GM12878 (cell line): ENCODE measurements at regions of chr6 and their contacts with region 1.

Region 1: DNA sequence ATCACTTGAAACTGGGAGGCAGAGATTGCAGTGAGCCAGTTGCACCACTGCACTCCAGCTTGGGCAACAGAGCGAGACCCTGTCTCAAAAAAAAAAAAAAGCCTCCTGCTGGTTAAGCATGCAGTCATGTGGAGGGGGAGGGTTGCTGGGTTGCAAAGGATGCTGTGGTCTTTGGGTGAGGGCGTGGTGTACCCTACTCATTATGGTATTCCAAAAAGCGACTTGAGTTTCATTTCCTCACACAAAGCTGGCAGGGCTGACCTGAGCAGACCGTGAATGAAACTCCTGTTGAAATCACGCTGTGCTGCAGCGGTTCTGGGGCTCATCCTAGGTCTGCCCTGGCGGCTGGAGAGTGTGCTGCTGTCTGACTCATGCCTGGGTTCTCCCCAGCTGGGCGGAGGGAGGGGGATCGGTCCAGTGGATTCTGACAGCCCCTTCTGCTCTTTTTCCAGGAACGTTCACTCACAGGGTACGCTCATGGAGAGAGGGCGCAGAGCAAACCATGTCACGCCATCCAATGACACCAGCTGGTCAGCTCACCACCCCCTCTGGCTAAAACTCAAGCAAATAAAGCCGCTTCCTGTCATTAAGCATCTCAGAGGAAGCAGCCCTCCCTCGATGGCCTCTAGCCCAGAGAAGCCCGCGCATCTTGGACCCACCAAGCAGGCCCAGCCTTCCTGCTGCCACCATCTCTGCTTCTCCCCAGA is 166.2 kb downstream of the SCML4 start:
- DNase-seq: peak; percentile 96
- ATAC-seq: peak; percentile 92
- H3K4me3 ChIP-seq: peak overlapping the region; percentile 64
- H3K27ac ChIP-seq: peak overlapping the region; percentile 84
- H3K4me1 ChIP-seq: peaks cover 19% of the 10 kb centered on the region
- H3K27me3 ChIP-seq: no peaks in the 10 kb centered on the region
- CTCF ChIP-seq: peak; percentile 4 to 47 (median 43); a peak in 3 of 6 replicates
- EP300 ChIP-seq: peak in 1 of 2 experiments; percentile 57; a peak in 1 of 4 replicates
- POLR2A ChIP-seq: peak; percentile 64
- RAD21 ChIP-seq: 0 out of 2 replicates have a peak, but pooled peaks have one; percentile 0

Region 2: GRCh38 chr6:107114213-107114905 is 543.5 kb before region 1 on chr6:
- CTCF ChIA-PET with region 1: no interaction called
- POLR2A ChIA-PET with region 1: no interaction called
- RAD21 ChIA-PET with region 1: no interaction called
- SMC1A ChIA-PET with region 1: interaction called, 3 read pairs
- in situ Hi-C with region 1: no loop called
- intact Hi-C with region 1: loop called (anchors 10 kb)
- DNase-seq: no peak
- ATAC-seq: peak; percentile 88
- H3K4me3 ChIP-seq: peak overlapping the region; percentile 57; the same call in 1 of the 2 replicates
- H3K27ac ChIP-seq: no peak overlapping the region; the same call in 1 of the 2 replicates
- H3K4me1 ChIP-seq: peaks cover 12% of the 10 kb centered on the region
- H3K27me3 ChIP-seq: no peaks in the 10 kb centered on the region; a peak in 1 of 4 replicates
- CTCF ChIP-seq: peak; percentile 65 to 84 (median 78); a peak in 5 of 6 replicates
- EP300 ChIP-seq: no peak
- POLR2A ChIP-seq: peak; percentile 69
- RAD21 ChIP-seq: peak; percentile 60

Region 3: GRCh38 chr6:107459283-107460082 is 198.4 kb before region 1 on chr6 and contains the start of gene PDSS2:
- CTCF ChIA-PET with region 1: interaction called, 3 read pairs
- POLR2A ChIA-PET with region 1: no interaction called
- RAD21 ChIA-PET with region 1: no interaction called
- SMC1A ChIA-PET with region 1: no interaction called
- in situ Hi-C with region 1: no loop called
- intact Hi-C with region 1: loop called (anchors 2 kb)
- DNase-seq: peak; percentile 91
- ATAC-seq: peak; percentile 94
- H3K4me3 ChIP-seq: peak within 1 kb of the TSS; percentile 94
- H3K27ac ChIP-seq: peak within 1 kb of the TSS; percentile 90
- H3K4me1 ChIP-seq: no peaks in the 10 kb centered on the region; the same call in 1 of the 2 replicates
- H3K27me3 ChIP-seq: no peaks in the 10 kb centered on the region
- CTCF ChIP-seq: peak; percentile 32 to 54 (median 51)
- EP300 ChIP-seq: no peak
- POLR2A ChIP-seq: peak; percentile 97
- RAD21 ChIP-seq: peak; percentile 10; the same call in 1 of the 2 replicates
- polyA plus RNA-seq, gene PDSS2: 7.9 to 9.1 TPM

Region 4: GRCh38 chr6:107618672-107619071 is 39.2 kb before region 1 on chr6:
- CTCF ChIA-PET with region 1: interaction called, 3 read pairs
- POLR2A ChIA-PET with region 1: no interaction called
- RAD21 ChIA-PET with region 1: no interaction called
- SMC1A ChIA-PET with region 1: interaction called, 6 read pairs
- in situ Hi-C with region 1: no loop called
- intact Hi-C with region 1: loop called (anchors 5 kb)
- DNase-seq: peak; percentile 86
- ATAC-seq: peak; percentile 97
- H3K4me3 ChIP-seq: no peak overlapping the region
- H3K27ac ChIP-seq: no peak overlapping the region
- H3K4me1 ChIP-seq: peaks cover 14% of the 10 kb centered on the region
- H3K27me3 ChIP-seq: peaks cover 0 to 2% of the 10 kb centered on the region in 2 experiments; a peak in 1 of 4 replicates
- CTCF ChIP-seq: no peak
- EP300 ChIP-seq: peak; percentile 22 to 34; a peak in 1 of 4 replicates
- POLR2A ChIP-seq: no peak
- RAD21 ChIP-seq: no peak

Region 5: GRCh38 chr6:107668743-107669474 is 11.0 kb after region 1 on chr6:
- CTCF ChIA-PET with region 1: interaction called, 10 read pairs
- POLR2A ChIA-PET with region 1: interaction called, 6 read pairs
- RAD21 ChIA-PET with region 1: interaction called, 6 read pairs
- SMC1A ChIA-PET with region 1: interaction called, 43 read pairs
- in situ Hi-C with region 1: no loop called
- intact Hi-C with region 1: loop called (anchors 1 kb)
- DNase-seq: peak; percentile 34
- ATAC-seq: peak; percentile 90
- H3K4me3 ChIP-seq: no peak overlapping the region
- H3K27ac ChIP-seq: peak overlapping the region; percentile 63
- H3K4me1 ChIP-seq: peaks cover 33% of the 10 kb centered on the region
- H3K27me3 ChIP-seq: no peaks in the 10 kb centered on the region
- CTCF ChIP-seq: no peak
- EP300 ChIP-seq: peak; percentile 17 to 46; a peak in 1 of 4 replicates
- POLR2A ChIP-seq: peak; percentile 52
- RAD21 ChIP-seq: no peak